Thyroid gland (tissue), 4 donors: ENCODE measurements at regions of chr12 and their contacts with region 1.

Region 1: DNA sequence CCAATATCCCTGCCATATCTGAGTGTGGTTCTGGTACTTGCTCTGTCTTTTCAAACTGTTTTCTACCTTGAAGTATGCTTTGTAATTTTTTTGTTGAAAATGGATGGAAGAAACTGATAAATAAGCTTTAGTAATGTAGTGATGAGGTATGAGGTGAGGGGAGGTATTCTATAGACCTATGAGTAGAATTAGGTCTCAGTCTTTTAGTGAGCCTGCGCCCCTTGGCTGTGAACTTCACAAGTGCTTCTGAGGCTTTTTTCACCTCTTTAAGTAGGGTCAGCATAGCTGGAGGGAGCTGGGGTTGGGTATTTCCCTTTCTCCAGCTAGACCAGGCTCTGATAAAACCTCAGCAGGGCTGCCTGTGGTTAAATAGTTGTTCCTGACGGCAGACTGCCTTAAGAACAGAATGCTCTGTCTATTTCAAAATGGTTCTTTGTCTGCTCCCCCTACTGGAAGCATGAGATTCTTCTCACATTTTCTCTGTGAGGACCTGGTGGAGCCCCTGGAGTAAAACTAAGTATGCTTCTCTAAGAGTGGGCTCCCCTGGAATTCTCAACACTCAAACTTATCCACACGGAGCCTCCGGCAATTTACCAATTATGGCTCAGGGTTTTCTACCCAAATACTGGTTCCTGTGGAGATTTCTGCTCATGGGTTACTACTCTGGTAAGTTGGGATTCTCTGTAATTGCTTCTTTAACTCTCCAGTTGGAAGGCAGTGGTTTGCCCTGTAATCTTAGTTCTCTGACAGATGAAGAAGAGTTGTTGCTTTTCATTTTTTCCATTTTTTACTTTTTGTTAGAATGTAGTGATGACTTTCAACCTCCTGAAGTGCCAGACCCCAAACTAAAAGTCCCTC is 13.1 kb downstream of the KRT5 start:
- DNase-seq: no peak
- H3K4me3 ChIP-seq: no peak overlapping the region
- H3K27ac ChIP-seq: no peak overlapping the region
- H3K4me1 ChIP-seq: no peaks in the 10 kb centered on the region
- H3K27me3 ChIP-seq: no peaks in the 10 kb centered on the region
- CTCF ChIP-seq: peak in 5 of 6 experiments; percentile 16 to 64 (median 57)
- POLR2A ChIP-seq: no peak

Region 2: DNA sequence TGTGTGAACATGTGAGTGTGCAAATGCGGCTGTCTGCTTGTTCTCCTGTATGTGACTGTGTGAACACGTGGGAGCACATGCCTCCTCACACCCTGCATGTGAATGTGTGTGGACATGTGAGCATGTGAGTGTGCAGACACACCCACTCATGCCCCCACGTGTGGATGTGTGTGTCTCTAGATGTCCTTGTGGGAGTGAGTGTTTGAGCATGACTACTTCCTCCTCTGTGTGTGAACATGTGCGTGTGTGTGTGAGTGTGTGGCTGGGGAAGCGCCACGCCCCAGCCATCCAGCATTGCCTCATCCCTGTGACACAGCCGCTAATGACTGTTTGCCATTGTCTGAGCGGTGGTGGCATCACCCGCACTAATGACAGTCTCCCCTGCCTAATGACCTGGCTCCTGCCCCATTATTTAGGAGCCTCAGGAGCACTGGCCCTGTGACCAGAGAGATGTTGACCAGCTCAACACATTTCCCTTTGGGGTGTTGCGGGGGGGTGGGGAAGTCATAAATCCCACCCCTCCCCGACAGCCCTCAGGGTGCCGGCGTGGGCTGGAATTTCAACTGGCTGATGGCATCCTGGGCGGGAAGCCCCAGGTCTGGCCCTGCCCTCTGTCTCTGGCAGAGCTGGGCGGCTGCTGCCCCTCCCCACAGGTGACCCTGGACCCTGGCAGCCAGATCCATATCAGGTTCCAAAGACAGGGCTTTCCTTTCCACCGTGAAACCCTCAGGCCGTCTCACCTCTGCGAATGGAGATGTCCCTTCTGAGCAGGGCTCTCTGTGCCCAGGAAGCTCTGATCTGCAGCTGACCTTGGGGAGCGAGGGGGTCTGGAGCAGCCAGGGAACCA is 303.8 kb before region 1 on chr12:
- intact Hi-C with region 1: no loop called
- DNase-seq: peak; percentile 46 to 63
- H3K4me3 ChIP-seq: no peak overlapping the region
- H3K27ac ChIP-seq: peak overlapping the region; percentile 88 to 93 (median 91)
- H3K4me1 ChIP-seq: peaks cover 37 to 48% of the 10 kb centered on the region in 2 donors
- H3K27me3 ChIP-seq: no peaks in the 10 kb centered on the region
- CTCF ChIP-seq: no peak
- POLR2A ChIP-seq: no peak

Region 3: DNA sequence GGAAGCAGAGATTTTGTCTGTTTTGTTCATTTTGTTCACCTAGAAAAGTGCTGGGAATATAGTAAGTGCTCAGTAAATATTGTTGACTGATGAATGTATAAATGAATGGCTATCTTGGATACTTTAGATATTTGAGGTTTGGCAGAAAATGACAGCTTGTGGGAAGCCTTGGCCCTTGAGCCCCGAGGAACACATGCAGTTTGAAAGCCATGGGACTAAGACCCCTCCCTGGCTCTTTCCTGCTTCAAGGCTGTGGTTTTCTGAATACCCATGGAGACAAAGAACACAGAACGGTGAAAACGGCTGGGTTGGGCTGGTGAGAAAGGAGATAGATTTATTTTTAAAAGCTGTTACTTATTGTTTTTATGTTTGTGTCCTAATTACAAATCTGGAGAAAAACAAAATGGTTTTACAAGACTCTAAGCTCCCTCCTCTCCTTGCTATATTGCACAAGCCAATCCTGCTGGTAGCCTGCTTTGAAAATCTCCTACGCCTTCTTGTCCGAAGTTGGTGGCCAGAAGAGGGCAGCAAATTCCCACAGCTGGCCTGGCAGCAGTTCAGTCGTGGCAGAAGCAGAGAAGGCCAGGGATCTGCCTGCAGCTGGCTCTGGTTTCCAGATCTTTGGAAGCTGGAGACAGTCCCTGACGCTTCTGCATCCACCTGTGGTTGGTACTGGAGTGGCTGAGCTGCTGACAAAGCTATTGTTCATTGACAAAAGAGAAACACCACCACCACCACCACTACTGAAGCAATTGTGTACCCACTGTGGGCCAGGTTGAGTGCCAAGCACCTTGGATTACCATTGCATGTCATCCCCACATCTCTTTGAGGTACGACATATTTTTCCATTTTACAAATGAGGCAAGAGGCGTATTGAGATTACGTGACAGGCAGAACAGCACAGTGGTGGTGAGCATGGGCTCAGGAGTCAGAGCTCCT is 134.6 kb before region 1 on chr12:
- intact Hi-C with region 1: loop called (anchors 10 kb)
- DNase-seq: peak; percentile 91 to 93
- H3K4me3 ChIP-seq: no peak overlapping the region
- H3K27ac ChIP-seq: peak overlapping the region; percentile 87 to 96 (median 90)
- H3K4me1 ChIP-seq: peaks cover 17 to 22% of the 10 kb centered on the region in 2 donors
- H3K27me3 ChIP-seq: no peaks in the 10 kb centered on the region
- CTCF ChIP-seq: peak; percentile 50 to 94 (median 83)
- POLR2A ChIP-seq: no peak